Activated T-helper 2 cell treated with anti-CD3 and anti-CD28 coated beads, Interferon-gamma antibody, Interleukin-2, Interleukin-4, amounts not matched to agents 10 μg/mL and 5 μg/mL and 100 μg/mL, durations not matched to agents 14 hours and 24 hours and 36 hours (primary cell): ENCODE measurements at regions of chr1 and their contacts with region 1.

Region 1: GRCh38 chr1:245045087-245045881 is 109.5 kb upstream of the KIF26B start:
- DNase-seq: no peak
- H3K4me3 Mint-ChIP-seq: no peak overlapping the region
- H3K27ac Mint-ChIP-seq: no peak overlapping the region
- H3K4me1 Mint-ChIP-seq: peaks cover 12% of the 10 kb centered on the region
- H3K27me3 Mint-ChIP-seq: no peaks in the 10 kb centered on the region

Region 2: GRCh38 chr1:244796718-244797406 is 248.4 kb before region 1 on chr1:
- intact Hi-C with region 1: loop called (anchors 1 kb)
- DNase-seq: peak; percentile 11
- H3K4me3 Mint-ChIP-seq: no peak overlapping the region
- H3K27ac Mint-ChIP-seq: no peak overlapping the region
- H3K4me1 Mint-ChIP-seq: peaks cover 2% of the 10 kb centered on the region
- H3K27me3 Mint-ChIP-seq: peaks cover 2% of the 10 kb centered on the region

Region 3: GRCh38 chr1:244896550-244896949 is 148.7 kb before region 1 on chr1:
- intact Hi-C with region 1: no loop called
- DNase-seq: no peak
- H3K4me3 Mint-ChIP-seq: no peak overlapping the region
- H3K27ac Mint-ChIP-seq: no peak overlapping the region
- H3K4me1 Mint-ChIP-seq: no peaks in the 10 kb centered on the region
- H3K27me3 Mint-ChIP-seq: no peaks in the 10 kb centered on the region